Activated CD8-positive, alpha-beta T cell treated with anti-CD3 and anti-CD28 coated beads for 36 hours (primary cell): ENCODE measurements at regions of chr6 and their contacts with region 1.

Region 1: GRCh38 chr6:27132532-27133280 is 114.8 kb upstream of the PRSS16 start:
- DNase-seq: peak; percentile 93
- ATAC-seq: peak; percentile 82
- H3K4me3 Mint-ChIP-seq: no peak overlapping the region
- H3K27ac Mint-ChIP-seq: no peak overlapping the region
- H3K4me1 Mint-ChIP-seq: peaks cover 18% of the 10 kb centered on the region
- H3K27me3 Mint-ChIP-seq: no peaks in the 10 kb centered on the region
- CTCF ChIP-seq: no peak

Region 2: GRCh38 chr6:26122793-26123674 is 1009.7 kb before region 1 on chr6:
- CTCF ChIA-PET with region 1: no interaction called
- POLR2A ChIA-PET with region 1: interaction called, 14 read pairs
- intact Hi-C with region 1: no loop called
- DNase-seq: peak; percentile 98
- ATAC-seq: peak; percentile 60
- H3K4me3 Mint-ChIP-seq: peak overlapping the region; percentile 84
- H3K27ac Mint-ChIP-seq: peak overlapping the region; percentile 98
- H3K4me1 Mint-ChIP-seq: peaks cover 27% of the 10 kb centered on the region
- H3K27me3 Mint-ChIP-seq: no peaks in the 10 kb centered on the region
- CTCF ChIP-seq: no peak

Region 3: GRCh38 chr6:26234421-26235296 is 898.0 kb before region 1 on chr6:
- CTCF ChIA-PET with region 1: no interaction called
- POLR2A ChIA-PET with region 1: interaction called, 42 read pairs
- intact Hi-C with region 1: no loop called
- DNase-seq: peak; percentile 86
- ATAC-seq: peak; percentile 65
- H3K4me3 Mint-ChIP-seq: peak overlapping the region; percentile 75
- H3K27ac Mint-ChIP-seq: peak overlapping the region; percentile 99
- H3K4me1 Mint-ChIP-seq: peaks cover 24% of the 10 kb centered on the region
- H3K27me3 Mint-ChIP-seq: peaks cover 5% of the 10 kb centered on the region
- CTCF ChIP-seq: no peak

Region 4: GRCh38 chr6:26285143-26286134 is 847.3 kb before region 1 on chr6:
- CTCF ChIA-PET with region 1: no interaction called
- POLR2A ChIA-PET with region 1: interaction called, 18 read pairs
- intact Hi-C with region 1: no loop called
- DNase-seq: peak; percentile 99
- ATAC-seq: peak; percentile 79
- H3K4me3 Mint-ChIP-seq: peak overlapping the region; percentile 88
- H3K27ac Mint-ChIP-seq: peak overlapping the region; percentile 100
- H3K4me1 Mint-ChIP-seq: peaks cover 15% of the 10 kb centered on the region
- H3K27me3 Mint-ChIP-seq: peaks cover 2% of the 10 kb centered on the region
- CTCF ChIP-seq: no peak

Region 5: DNA sequence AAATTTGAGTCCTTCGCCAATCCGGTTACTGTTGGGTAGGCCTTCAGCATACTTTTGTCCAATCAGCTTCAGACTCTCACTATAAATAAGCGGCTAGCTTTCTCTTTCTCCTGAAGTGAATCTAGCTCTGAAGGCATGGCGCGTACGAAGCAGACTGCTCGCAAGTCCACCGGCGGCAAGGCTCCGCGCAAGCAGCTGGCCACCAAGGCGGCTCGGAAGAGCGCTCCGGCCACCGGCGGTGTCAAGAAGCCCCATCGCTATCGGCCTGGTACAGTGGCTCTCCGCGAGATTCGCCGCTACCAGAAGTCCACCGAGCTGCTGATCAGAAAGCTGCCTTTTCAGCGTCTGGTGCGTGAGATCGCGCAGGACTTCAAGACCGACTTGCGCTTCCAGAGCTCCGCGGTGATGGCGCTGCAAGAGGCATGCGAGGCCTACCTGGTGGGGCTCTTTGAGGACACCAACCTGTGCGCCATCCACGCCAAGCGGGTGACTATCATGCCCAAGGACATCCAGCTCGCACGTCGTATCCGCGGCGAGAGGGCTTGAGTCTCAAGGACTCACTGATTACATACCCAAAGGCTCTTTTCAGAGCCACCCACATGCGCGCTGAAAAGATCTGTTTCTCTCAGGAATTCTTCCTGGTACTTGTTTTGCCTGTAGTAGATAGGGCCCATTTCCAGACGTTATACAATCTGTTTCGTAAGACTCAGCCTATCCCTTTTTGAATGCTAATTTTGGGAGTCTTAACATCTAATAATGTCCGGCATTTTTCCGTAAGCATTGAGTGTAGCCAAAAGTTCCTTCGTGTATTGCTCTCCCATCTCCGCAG is 677.4 kb after region 1 on chr6:
- CTCF ChIA-PET with region 1: no interaction called
- POLR2A ChIA-PET with region 1: interaction called, 103 read pairs
- intact Hi-C with region 1: loop called (anchors 5 kb)
- DNase-seq: peak; percentile 78
- ATAC-seq: peak; percentile 38
- H3K4me3 Mint-ChIP-seq: peak overlapping the region; percentile 88
- H3K27ac Mint-ChIP-seq: peak overlapping the region; percentile 87
- H3K4me1 Mint-ChIP-seq: peaks cover 56% of the 10 kb centered on the region
- H3K27me3 Mint-ChIP-seq: no peaks in the 10 kb centered on the region
- CTCF ChIP-seq: no peak

Region 6: DNA sequence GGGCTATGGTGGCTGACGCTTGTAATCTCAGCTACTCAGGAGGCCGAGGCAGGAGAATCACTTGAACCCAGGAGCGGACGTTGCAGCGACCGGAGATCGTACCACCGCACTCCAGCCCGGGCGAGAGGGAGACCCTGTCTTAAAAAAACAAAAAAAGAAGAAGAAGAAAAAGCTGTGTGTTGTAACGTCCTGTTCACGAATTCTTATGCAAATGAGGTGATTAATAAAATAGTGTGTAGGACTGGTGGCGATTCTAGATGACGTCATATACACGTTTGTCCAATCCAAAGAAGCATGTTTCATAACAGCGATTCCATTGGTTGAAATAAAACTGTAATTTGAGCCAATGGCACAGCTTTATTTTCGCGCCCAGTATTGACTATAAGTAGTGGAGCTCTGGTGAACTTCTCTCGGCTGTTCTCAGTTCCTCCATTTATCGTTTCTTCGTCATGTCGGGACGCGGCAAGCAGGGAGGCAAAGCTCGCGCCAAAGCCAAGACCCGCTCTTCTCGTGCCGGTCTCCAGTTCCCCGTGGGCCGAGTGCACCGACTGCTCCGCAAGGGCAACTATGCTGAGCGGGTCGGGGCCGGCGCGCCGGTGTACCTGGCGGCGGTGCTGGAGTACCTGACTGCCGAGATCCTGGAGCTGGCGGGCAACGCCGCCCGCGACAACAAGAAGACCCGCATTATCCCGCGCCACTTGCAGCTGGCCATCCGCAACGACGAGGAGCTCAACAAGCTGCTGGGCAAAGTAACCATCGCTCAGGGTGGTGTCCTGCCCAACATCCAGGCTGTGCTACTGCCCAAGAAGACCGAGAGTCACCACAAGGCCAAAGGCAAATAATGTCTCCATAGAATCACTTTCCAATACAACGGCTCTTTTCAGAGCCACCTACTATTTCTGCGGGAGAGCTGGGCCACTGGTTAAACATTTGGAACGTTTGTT is 732.5 kb after region 1 on chr6:
- CTCF ChIA-PET with region 1: no interaction called
- POLR2A ChIA-PET with region 1: interaction called, 59 read pairs
- intact Hi-C with region 1: no loop called
- DNase-seq: peak; percentile 81
- ATAC-seq: peak; percentile 58
- H3K4me3 Mint-ChIP-seq: peak overlapping the region; percentile 91
- H3K27ac Mint-ChIP-seq: peak overlapping the region; percentile 98
- H3K4me1 Mint-ChIP-seq: peaks cover 27% of the 10 kb centered on the region
- H3K27me3 Mint-ChIP-seq: no peaks in the 10 kb centered on the region
- CTCF ChIP-seq: no peak